ENCODE measurements at regions of chr7 and their contacts with region 1.

Region 1: GRCh38 chr7:105013221-105013815 is 687 bp upstream of the KMT2E start:
- DNase-seq: peak; percentile 97 to 98
- H3K4me3 ChIP-seq: peak overlapping the region; percentile 91 to 94
- H3K27ac ChIP-seq: peak overlapping the region; percentile 100
- H3K4me1 ChIP-seq: peaks cover 47% of the 10 kb centered on the region
- H3K27me3 ChIP-seq: no peaks in the 10 kb centered on the region
- CTCF ChIP-seq: peak in 2 of 3 experiments; percentile 2 to 67
- POLR2A ChIP-seq: peak in 1 of 2 donors; percentile 72

Region 2: DNA sequence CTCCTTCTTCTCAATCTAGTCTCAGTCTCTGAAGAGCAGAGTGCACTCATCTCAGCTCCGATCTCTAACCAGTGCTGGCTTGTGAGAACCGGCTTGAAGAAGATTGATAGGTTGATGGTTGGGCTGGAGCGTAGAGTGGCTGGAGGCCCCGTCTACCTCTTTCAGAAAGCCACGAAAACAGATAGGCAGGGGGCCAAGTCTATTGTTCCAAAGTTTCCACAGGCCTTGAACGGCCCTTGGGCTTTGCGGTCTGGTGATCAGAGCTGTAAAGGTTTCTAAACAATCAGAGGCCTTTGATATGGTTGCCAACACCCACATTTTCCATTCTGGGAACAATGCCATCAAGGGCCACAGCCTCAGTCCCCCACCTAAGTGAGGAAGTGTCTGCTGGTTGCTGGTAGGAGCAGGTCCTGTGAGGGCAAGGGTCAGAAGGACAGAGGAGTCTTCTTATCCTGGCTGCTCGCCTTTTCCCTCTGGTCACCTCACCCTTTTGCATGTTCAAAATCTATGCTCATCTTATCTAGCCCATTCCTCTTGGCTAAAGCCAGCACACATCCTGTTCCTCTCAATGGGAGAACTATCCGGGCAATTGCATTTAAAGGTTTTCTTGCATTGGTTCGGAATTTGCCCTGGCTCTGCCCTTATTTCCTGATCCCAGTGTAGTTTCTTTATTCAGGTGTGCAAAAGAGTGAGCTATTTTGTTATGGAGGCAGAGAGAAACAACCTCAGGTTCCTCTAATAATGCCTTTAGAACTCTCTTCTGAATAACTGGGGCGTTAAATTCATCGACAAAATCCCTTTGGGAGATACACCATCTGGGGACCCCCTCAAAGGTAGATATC is 69.6 kb before region 1 on chr7:
- intact Hi-C with region 1: loop called (anchors 10 kb)
- DNase-seq: no peak
- H3K4me3 ChIP-seq: no peak overlapping the region
- H3K27ac ChIP-seq: peak overlapping the region; percentile 87
- H3K4me1 ChIP-seq: peaks cover 28% of the 10 kb centered on the region
- H3K27me3 ChIP-seq: no peaks in the 10 kb centered on the region
- CTCF ChIP-seq: no peak
- POLR2A ChIP-seq: no peak

Region 3: GRCh38 chr7:104983578-104984539 is 29.5 kb before region 1 on chr7:
- intact Hi-C with region 1: loop called (anchors 5 kb)
- DNase-seq: peak in 1 of 2 donors; percentile 93
- H3K4me3 ChIP-seq: peak overlapping the region; percentile 57 to 66
- H3K27ac ChIP-seq: peak overlapping the region; percentile 97
- H3K4me1 ChIP-seq: peaks cover 73% of the 10 kb centered on the region
- H3K27me3 ChIP-seq: no peaks in the 10 kb centered on the region
- CTCF ChIP-seq: peak in 2 of 3 experiments; percentile 49 to 53
- POLR2A ChIP-seq: peak in 1 of 2 donors; percentile 45

Measured in vagina (tissue), 2 donors.